ENCODE measurements at regions of chr15 and their contacts with region 1.

Region 1: GRCh38 chr15:83567318-83567717 is 86.6 kb upstream of the ADAMTSL3 start:
- DNase-seq: no peak
- ATAC-seq: no peak
- H3K4me3 ChIP-seq: no peak overlapping the region
- H3K27ac ChIP-seq: no peak overlapping the region
- H3K4me1 ChIP-seq: no peaks in the 10 kb centered on the region
- H3K27me3 ChIP-seq: no peaks in the 10 kb centered on the region
- CTCF ChIP-seq: no peak
- POLR2A ChIP-seq: no peak

Region 2: DNA sequence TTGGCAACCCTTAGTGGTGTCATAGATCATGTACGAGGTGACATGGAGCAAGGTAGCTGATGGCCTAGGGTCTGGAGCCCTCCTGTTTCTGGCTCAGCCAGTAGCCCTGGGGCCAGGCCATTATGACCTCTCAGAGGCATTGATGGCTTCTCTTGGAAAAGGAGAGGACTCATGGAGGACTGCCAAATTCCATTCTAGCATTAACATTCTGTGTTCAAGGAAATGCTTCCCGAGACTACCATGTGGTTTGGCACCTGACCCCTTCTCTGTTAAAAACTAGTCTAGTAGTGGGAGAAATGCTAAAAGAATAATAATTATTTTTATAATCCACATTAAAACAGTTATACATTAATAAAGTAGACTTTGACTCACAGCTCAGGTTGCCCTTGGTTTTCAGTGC is 46.4 kb after region 1 on chr15:
- in situ Hi-C with region 1: no loop called
- intact Hi-C with region 1: no loop called
- DNase-seq: no peak
- ATAC-seq: no peak
- H3K4me3 ChIP-seq: no peak overlapping the region
- H3K27ac ChIP-seq: no peak overlapping the region
- H3K4me1 ChIP-seq: no peaks in the 10 kb centered on the region
- H3K27me3 ChIP-seq: no peaks in the 10 kb centered on the region
- CTCF ChIP-seq: no peak
- POLR2A ChIP-seq: no peak

Region 3: GRCh38 chr15:83747050-83747717 is 179.9 kb after region 1 on chr15:
- in situ Hi-C with region 1: loop called in 1 of 4 experiments (anchors 25 kb)
- intact Hi-C with region 1: loop called (anchors 5 kb)
- DNase-seq: peak; percentile 12 to 43
- ATAC-seq: peak; percentile 80
- H3K4me3 ChIP-seq: peak overlapping the region in 1 of 4 donors; percentile 24
- H3K27ac ChIP-seq: peak overlapping the region in 3 of 4 donors; percentile 27 to 50 (median 49)
- H3K4me1 ChIP-seq: no peaks in the 10 kb centered on the region
- H3K27me3 ChIP-seq: no peaks in the 10 kb centered on the region
- CTCF ChIP-seq: peak in 1 of 5 experiments; percentile 37
- POLR2A ChIP-seq: no peak

Region 4: DNA sequence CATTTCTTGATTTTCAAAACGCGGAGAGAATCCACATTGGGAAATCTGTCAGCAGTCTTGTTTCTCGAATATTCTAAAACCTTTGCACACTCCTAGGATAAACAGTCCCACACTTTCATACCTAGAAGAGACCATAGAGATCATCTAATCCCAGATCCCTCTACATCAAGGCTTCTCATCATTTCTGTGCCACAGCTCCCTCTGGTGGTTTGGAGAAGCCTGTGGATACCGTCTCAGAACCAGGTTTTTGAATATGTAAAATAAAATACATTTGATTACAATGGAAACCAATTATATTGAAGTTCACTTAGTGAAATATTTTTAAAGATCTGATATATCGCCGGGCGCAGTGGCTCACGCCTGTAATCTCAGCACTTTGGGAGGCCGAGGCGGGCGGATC is 456.3 kb after region 1 on chr15:
- in situ Hi-C with region 1: loop called in 3 of 4 experiments (anchors 10 to 25 kb)
- intact Hi-C with region 1: loop called (anchors 5 kb)
- DNase-seq: no peak
- ATAC-seq: no peak
- H3K4me3 ChIP-seq: no peak overlapping the region
- H3K27ac ChIP-seq: no peak overlapping the region
- H3K4me1 ChIP-seq: no peaks in the 10 kb centered on the region
- H3K27me3 ChIP-seq: no peaks in the 10 kb centered on the region
- CTCF ChIP-seq: peak in 4 of 5 experiments; percentile 24 to 47 (median 37)
- POLR2A ChIP-seq: no peak